ENCODE measurements at regions of chr15 and their contacts with region 1.

Region 1: DNA sequence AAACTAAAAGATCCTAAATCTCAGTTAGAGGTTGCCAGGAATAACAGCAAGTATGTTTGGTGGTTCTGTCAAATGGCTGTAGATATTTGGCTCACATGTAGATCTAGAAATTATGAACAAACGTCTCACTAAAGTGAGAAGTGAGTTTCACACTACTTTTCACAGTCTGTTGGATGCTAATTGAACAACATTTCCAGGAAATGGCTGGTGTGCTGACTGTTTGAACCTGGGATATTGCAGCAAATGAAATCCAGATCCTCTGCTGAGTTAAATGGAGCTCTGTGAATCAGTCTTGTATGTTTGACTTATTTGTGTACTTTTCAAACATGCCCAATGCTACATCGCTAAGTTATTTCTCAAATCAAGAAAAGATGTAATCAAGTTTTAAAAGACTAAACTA is 21.3 kb upstream of the RSL24D1 start:
- DNase-seq: no peak
- ATAC-seq: peak in 2 of 4 donors; percentile 20 to 24
- H3K4me3 ChIP-seq: no peak overlapping the region
- H3K27ac ChIP-seq: peak overlapping the region in 1 of 4 donors; percentile 24
- H3K4me1 ChIP-seq: peaks cover 0 to 6% (median 0%) of the 10 kb centered on the region in 3 donors
- H3K27me3 ChIP-seq: no peaks in the 10 kb centered on the region
- CTCF ChIP-seq: no peak

Region 2: GRCh38 chr15:55279746-55280351 is 61.8 kb after region 1 on chr15:
- intact Hi-C with region 1: loop called in 1 of 3 experiments (anchors 5 kb)
- DNase-seq: peak in 3 of 6 donors; percentile 24 to 41 (median 28)
- ATAC-seq: peak; percentile 52 to 70 (median 60)
- H3K4me3 ChIP-seq: no peak overlapping the region
- H3K27ac ChIP-seq: peak overlapping the region in 2 of 4 donors; percentile 29 to 54
- H3K4me1 ChIP-seq: peaks cover 19 to 38% (median 19%) of the 10 kb centered on the region in 3 donors
- H3K27me3 ChIP-seq: no peaks in the 10 kb centered on the region
- CTCF ChIP-seq: no peak

Region 3: DNA sequence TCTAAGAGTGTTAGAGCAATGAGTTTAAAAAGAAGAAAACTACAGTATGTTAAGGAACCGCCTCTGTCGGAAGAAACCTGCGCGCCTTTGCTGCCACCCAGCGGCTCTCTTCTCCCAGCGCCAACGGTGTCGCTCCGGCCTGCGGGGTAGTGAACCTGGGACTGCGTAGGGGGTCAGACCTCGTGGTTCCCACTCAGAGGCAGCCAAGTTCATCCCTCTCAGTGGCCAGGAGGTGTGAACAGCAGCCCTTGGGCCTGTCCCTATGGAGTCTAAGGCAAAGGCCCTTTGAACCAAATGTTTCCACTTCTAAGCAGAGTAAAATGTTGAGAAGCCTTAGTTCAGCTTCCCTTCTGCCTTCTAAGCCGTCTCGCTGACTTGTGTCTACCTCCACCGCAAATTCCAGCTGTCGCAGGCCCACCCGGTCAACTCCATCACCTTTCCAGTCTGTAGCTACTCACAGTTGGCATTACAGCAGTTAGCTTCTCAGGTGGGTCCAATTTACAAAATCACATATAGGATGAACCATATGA is 72.5 kb after region 1 on chr15:
- intact Hi-C with region 1: loop called in 1 of 3 experiments (anchors 5 kb)
- DNase-seq: peak; percentile 73 to 91 (median 82)
- ATAC-seq: peak; percentile 83 to 92 (median 86)
- H3K4me3 ChIP-seq: peak overlapping the region; percentile 53 to 88 (median 76)
- H3K27ac ChIP-seq: peak overlapping the region; percentile 86 to 88 (median 88)
- H3K4me1 ChIP-seq: peaks cover 0 to 7% (median 1%) of the 10 kb centered on the region in 3 donors
- H3K27me3 ChIP-seq: no peaks in the 10 kb centered on the region
- CTCF ChIP-seq: peak; percentile 38 to 81 (median 76)

Region 4: GRCh38 chr15:55434989-55435825 is 217.2 kb after region 1 on chr15:
- intact Hi-C with region 1: loop called in 1 of 3 experiments (anchors 10 kb)
- DNase-seq: no peak
- ATAC-seq: peak in 3 of 4 donors; percentile 80 to 85 (median 84)
- H3K4me3 ChIP-seq: no peak overlapping the region
- H3K27ac ChIP-seq: no peak overlapping the region
- H3K4me1 ChIP-seq: no peaks in the 10 kb centered on the region
- H3K27me3 ChIP-seq: no peaks in the 10 kb centered on the region
- CTCF ChIP-seq: peak in 2 of 4 donors; percentile 21 to 31

Measured in pancreas (tissue), 10 donors.